ENCODE measurements at regions of chr2 and their contacts with region 1.

Region 1: DNA sequence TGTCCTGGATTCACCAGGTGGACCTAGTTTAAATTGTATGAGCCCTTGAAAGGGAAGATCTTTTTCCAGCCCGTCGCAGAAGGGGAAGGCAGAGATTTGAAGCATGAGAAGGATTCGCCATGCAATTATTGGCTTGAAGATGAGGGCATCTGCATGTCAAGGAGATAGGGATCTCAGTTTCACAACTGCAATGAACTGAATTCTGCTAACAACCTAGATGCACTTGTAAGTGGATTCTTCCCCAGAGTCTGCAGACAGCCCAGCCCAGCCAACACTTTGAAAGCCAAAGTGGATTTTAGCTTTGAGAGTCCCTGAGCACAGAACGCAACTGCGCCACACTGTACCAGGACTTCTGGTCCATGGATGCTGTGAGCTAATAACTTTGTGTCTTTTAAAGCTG is 286.0 kb downstream of the TSN start:
- DNase-seq: no peak
- H3K4me3 ChIP-seq: no peak overlapping the region
- H3K27me3 ChIP-seq: peaks cover 2% of the 10 kb centered on the region; the same call in 1 of the 2 replicates
- CTCF ChIP-seq: no peak

Region 2: GRCh38 chr2:122307763-122308162 is 266.3 kb after region 1 on chr2:
- CTCF ChIA-PET with region 1: no interaction called
- POLR2A ChIA-PET with region 1: interaction called, 14 read pairs
- DNase-seq: no peak
- H3K4me3 ChIP-seq: no peak overlapping the region
- H3K27me3 ChIP-seq: no peaks in the 10 kb centered on the region
- CTCF ChIP-seq: no peak

Measured in BJ (cell line).